Left ventricle myocardium superior (tissue), 1 donor: ENCODE measurements at regions of chr15 and their contacts with region 1.

Region 1: GRCh38 chr15:62071711-62072308 is 5.0 kb downstream of the C2CD4A start:
- DNase-seq: no peak
- ATAC-seq: no peak

Region 2: GRCh38 chr15:61871926-61872522 is 199.8 kb before region 1 on chr15:
- intact Hi-C with region 1: loop called (anchors 10 kb)
- DNase-seq: no peak
- ATAC-seq: no peak

Region 3: DNA sequence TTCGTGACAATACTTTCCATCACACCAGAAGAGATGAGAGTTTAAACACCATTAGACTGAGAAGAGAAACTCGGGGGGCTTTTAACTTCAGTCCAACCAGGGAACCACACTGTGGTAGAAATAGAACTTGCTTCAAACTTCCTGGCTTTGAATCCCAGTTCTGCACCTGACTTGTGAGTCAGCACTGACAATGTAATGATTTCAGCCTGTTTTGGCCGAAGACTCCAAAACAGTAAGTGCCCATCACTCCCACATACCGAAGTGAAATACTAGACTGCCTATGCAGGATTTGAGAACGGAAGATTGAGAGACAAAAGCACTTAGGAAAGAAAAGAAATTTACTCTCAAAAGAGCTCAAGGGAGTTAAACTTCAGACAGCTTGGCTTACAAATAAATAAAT is 66.3 kb after region 1 on chr15:
- intact Hi-C with region 1: no loop called
- DNase-seq: no peak
- ATAC-seq: no peak